Activated CD4-positive, alpha-beta T cell treated with anti-CD3 and anti-CD28 coated beads, Interleukin-2, amount 10 ng/mL, durations not matched to agents 24 days and 14 days (primary cell): ENCODE measurements at regions of chr13 and their contacts with region 1.

Region 1: DNA sequence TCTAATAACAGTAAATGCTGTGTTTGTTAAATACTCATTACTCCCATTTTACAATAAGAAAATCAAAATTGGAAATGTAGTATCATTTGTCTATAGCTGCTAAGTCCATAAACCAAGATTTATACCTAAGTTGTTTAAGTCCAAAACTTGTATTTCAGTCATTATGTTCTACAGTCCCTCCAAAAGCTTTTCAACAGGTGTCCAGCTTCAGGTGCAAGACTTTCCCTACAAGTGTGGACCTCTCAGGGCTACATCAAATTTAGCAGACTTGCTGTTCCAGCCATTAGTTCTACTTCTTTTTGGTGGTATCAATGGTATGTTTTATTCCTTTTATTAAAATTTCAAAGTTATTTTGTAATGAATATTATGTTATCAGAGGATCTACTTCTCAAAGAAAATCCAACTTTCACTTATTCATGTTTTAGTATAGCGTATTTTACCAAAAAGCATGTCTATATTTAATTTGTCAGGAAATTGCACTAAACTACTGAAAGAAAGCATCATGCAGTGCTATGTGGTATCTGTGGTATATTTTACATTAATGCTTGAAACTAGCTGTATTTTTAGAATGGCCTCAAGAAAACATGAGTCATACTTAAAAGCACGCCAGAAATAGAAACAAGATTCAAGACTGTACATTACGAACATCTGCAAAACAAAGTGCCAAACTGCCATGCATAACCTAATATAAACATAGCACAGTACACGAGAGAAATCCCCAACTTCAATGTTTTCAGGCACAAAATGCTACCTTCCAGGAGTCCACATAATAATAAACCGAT is 44.5 kb downstream of the VWA8 start:
- DNase-seq: peak; percentile 76
- H3K4me3 Mint-ChIP-seq: peak overlapping the region; percentile 76
- H3K27ac Mint-ChIP-seq: peak overlapping the region; percentile 86
- H3K4me1 Mint-ChIP-seq: peaks cover 44% of the 10 kb centered on the region
- H3K27me3 Mint-ChIP-seq: no peaks in the 10 kb centered on the region

Region 2: DNA sequence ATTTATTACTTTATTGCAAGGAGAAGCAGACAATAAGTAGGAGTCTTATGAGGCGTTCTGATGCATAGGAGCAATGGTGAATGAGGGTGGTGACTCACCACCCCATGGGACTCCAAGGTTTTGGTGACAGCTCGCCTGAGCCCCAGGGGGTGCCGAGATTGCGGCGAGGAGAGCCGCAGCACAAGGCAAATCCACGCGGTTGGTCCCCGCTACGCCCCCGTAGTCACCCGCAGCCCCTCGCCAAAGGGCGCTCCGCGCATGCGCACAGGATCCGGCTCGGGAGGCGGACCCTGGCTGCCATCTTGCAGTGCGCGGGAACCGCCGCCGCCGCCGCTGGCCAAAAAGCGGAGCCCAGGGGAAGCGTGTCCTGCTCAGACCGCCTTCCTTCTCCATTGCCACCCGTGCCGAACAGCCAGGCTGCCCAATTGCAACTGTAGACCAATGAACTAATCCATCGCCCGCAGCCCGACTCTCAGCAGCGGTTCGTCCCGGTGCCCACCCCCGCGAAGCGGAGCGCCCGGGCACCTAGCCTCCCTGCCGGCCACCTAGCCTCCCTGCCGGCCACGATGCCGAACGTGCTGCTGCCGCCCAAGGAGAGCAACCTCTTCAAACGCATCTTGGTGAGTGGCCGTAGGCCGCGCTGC is 605.3 kb before region 1 on chr13 and contains the start of gene NAA16:
- intact Hi-C with region 1: loop called (anchors 5 kb)
- DNase-seq: peak; percentile 98
- H3K4me3 Mint-ChIP-seq: peak within 1 kb of the TSS; percentile 94
- H3K27ac Mint-ChIP-seq: peak within 1 kb of the TSS; percentile 93
- H3K4me1 Mint-ChIP-seq: peaks cover 37% of the 10 kb centered on the region
- H3K27me3 Mint-ChIP-seq: no peaks in the 10 kb centered on the region
- total RNA-seq, gene NAA16: 30.3 and 31.2 TPM in 2 replicates

Region 3: DNA sequence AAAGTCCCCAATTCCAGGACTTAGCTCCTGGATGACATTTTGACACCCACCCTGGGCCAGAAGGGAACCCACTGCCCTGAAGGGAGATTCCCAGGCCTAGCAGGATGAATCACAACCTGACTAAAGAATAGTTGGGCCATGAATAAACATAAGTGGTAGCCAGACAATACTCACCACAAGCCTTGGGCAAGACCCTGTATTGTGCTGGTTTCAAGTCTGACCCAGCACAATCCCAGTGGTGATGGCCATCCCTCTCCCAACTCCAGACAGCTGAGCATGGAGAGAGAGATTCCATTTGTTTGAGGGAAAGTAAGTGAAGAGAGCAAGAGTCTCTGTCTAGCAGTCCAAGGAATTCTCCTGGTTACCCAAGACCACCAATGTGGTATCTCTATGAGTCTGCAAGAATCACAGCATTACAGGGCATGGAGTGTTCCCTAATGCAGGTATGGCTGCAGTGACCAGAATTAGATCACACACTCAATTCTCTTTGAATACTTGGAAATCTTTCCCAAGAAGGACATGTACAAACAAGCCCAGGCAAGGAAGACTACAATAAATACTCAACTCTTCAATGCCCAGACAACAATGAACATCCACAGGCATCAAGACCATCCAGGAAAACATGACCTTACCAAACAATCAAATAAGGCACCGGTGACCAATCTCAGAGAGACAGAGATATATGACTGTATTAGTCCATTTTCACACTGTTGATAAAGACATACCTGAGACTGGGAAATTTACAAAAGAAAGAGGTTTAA is 113.5 kb before region 1 on chr13:
- intact Hi-C with region 1: no loop called
- DNase-seq: no peak
- H3K4me3 Mint-ChIP-seq: no peak overlapping the region
- H3K27ac Mint-ChIP-seq: no peak overlapping the region
- H3K4me1 Mint-ChIP-seq: peaks cover 5% of the 10 kb centered on the region
- H3K27me3 Mint-ChIP-seq: no peaks in the 10 kb centered on the region

Region 4: GRCh38 chr13:41905600-41906254 is 10.6 kb before region 1 on chr13:
- intact Hi-C with region 1: loop called (anchors 1 kb)
- DNase-seq: no peak
- H3K4me3 Mint-ChIP-seq: no peak overlapping the region
- H3K27ac Mint-ChIP-seq: no peak overlapping the region
- H3K4me1 Mint-ChIP-seq: peaks cover 9% of the 10 kb centered on the region
- H3K27me3 Mint-ChIP-seq: no peaks in the 10 kb centered on the region

Region 5: GRCh38 chr13:41939398-41939797 is 23.0 kb after region 1 on chr13:
- intact Hi-C with region 1: no loop called
- DNase-seq: no peak
- H3K4me3 Mint-ChIP-seq: no peak overlapping the region
- H3K27ac Mint-ChIP-seq: no peak overlapping the region
- H3K4me1 Mint-ChIP-seq: peaks cover 9% of the 10 kb centered on the region
- H3K27me3 Mint-ChIP-seq: no peaks in the 10 kb centered on the region

Region 6: GRCh38 chr13:41960639-41961465 is 44.5 kb after region 1 on chr13 and contains the start of gene VWA8:
- intact Hi-C with region 1: loop called (anchors 1 kb)
- DNase-seq: peak; percentile 95
- H3K4me3 Mint-ChIP-seq: peak within 1 kb of the TSS; percentile 95
- H3K27ac Mint-ChIP-seq: peak within 1 kb of the TSS; percentile 93
- H3K4me1 Mint-ChIP-seq: peaks cover 32% of the 10 kb centered on the region
- H3K27me3 Mint-ChIP-seq: no peaks in the 10 kb centered on the region
- total RNA-seq, gene VWA8: 28.4 TPM in 2 replicates

Region 7: DNA sequence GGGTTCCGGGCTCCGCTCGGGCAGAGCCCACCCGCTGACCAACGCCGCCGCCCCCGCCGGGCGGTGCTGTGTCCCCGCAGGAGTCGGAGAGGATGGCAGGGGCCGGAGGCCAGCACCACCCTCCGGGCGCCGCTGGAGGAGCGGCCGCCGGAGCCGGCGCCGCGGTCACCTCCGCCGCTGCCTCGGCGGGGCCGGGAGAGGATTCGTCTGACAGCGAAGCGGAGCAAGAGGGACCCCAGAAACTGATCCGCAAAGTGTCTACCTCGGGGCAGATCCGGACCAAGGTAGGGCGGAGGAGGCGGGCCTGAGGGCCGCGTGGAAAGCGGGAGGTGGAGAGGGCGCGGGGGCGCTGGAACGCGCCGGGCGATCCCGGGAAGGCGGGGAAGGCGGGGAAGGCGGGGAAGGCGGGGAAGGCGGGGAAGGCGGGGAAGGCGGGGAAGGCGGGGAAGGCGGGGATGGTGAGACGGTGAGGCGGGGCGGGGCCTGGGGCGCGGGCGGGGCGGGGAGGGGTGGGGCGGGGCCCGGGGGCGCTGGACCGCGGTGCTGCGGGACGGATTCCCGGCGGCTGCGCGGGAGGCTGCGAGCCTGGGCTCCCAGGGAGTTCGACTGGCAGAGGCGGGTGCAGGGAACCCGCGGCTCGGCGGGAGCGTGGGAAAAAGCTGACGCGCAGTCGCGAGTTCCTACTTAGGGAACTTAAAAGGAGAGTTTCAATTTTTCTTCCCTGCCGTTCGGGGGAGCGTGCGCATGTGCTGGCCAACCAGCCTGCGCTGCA is 132.5 kb after region 1 on chr13:
- intact Hi-C with region 1: loop called (anchors 2 kb)
- DNase-seq: peak; percentile 89
- H3K4me3 Mint-ChIP-seq: peak overlapping the region; percentile 90
- H3K27ac Mint-ChIP-seq: peak overlapping the region; percentile 79
- H3K4me1 Mint-ChIP-seq: peaks cover 20% of the 10 kb centered on the region
- H3K27me3 Mint-ChIP-seq: peaks cover 12% of the 10 kb centered on the region

Region 8: GRCh38 chr13:42392716-42393572 is 476.6 kb after region 1 on chr13:
- intact Hi-C with region 1: loop called (anchors 10 kb)
- DNase-seq: peak; percentile 86
- H3K4me3 Mint-ChIP-seq: peak overlapping the region; percentile 91
- H3K27ac Mint-ChIP-seq: peak overlapping the region; percentile 97
- H3K4me1 Mint-ChIP-seq: peaks cover 76% of the 10 kb centered on the region
- H3K27me3 Mint-ChIP-seq: no peaks in the 10 kb centered on the region

Region 9: GRCh38 chr13:43368003-43368402 is 1451.6 kb after region 1 on chr13:
- intact Hi-C with region 1: no loop called
- DNase-seq: peak; percentile 70
- H3K4me3 Mint-ChIP-seq: peak overlapping the region; percentile 69
- H3K27ac Mint-ChIP-seq: peak overlapping the region; percentile 23
- H3K4me1 Mint-ChIP-seq: peaks cover 16% of the 10 kb centered on the region
- H3K27me3 Mint-ChIP-seq: no peaks in the 10 kb centered on the region